ENCODE measurements at regions of chr1 and their contacts with region 1.

Region 1: GRCh38 chr1:204384994-204385352 is 25.2 kb upstream of the PLEKHA6 start:
- DNase-seq: no peak
- H3K4me3 Mint-ChIP-seq: no peak overlapping the region
- H3K27ac Mint-ChIP-seq: no peak overlapping the region
- H3K4me1 Mint-ChIP-seq: peaks cover 2% of the 10 kb centered on the region
- H3K27me3 Mint-ChIP-seq: peaks cover 12% of the 10 kb centered on the region

Region 2: GRCh38 chr1:204398217-204399081 is 13.5 kb after region 1 on chr1:
- intact Hi-C with region 1: loop called (anchors 2 kb)
- DNase-seq: peak; percentile 88
- H3K4me3 Mint-ChIP-seq: no peak overlapping the region
- H3K27ac Mint-ChIP-seq: peak overlapping the region; percentile 66
- H3K4me1 Mint-ChIP-seq: peaks cover 2% of the 10 kb centered on the region
- H3K27me3 Mint-ChIP-seq: no peaks in the 10 kb centered on the region

Region 3: GRCh38 chr1:204445919-204446349 is 61.0 kb after region 1 on chr1:
- intact Hi-C with region 1: no loop called
- DNase-seq: peak; percentile 84
- H3K4me3 Mint-ChIP-seq: no peak overlapping the region
- H3K27ac Mint-ChIP-seq: no peak overlapping the region
- H3K4me1 Mint-ChIP-seq: peaks cover 33% of the 10 kb centered on the region
- H3K27me3 Mint-ChIP-seq: no peaks in the 10 kb centered on the region